ENCODE measurements at regions of chrX and their contacts with region 1.

Region 1: DNA sequence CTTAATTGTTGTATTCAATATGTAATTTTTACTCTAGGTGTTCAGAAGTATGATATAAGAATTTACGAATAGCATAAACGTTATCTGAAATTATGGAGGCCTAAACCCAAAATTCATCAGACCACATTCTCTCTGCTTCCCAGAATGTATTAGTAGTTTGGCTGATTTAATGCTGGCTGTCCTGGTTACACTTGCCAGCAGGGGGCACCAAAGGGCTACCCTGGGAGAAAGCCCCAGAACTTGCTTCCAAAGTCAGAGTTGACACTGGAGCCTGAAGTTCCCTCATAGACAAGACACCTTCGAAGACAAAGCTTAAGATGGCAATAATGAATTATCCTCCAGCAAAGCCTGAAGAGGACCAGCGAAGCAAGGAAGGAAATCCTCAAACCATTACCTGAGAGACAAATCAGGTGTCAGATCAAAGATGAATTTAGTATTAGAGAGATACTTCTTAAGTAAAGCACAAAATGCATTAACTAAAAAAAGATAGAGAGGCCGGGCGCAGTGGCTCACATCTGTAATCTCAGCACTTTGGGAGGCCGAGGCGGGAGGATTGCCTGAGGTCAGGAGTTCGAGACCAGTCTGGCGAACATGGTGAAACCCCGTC is 11.3 kb upstream of the ANOS1 start:
- DNase-seq: peak; percentile 66 to 82
- ATAC-seq: no peak
- H3K4me3 ChIP-seq: no peak overlapping the region
- H3K27ac ChIP-seq: no peak overlapping the region
- H3K4me1 ChIP-seq: no peaks in the 10 kb centered on the region
- H3K27me3 ChIP-seq: peaks cover 0 to 6% of the 10 kb centered on the region in 2 donors

Region 2: DNA sequence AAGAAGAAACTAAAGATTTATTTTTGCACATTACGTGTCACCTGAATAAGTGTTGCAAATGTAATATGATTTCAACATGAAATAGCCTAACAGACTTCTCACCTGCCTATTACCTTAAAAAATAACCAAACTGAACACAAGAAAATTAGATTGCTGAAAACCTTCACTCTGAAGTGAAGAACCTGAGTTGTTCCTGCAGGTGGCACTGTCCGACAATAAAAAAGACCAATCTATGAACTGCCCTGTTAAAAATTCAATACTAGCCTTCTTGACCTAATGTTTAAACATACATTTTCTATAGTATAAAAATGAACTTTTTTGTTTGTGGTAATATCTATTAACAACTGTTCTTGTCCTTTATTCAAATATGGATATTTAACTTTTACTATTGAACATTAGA is 746.8 kb before region 1 on chrX:
- intact Hi-C with region 1: loop called (anchors 5 kb)
- DNase-seq: no peak
- ATAC-seq: no peak
- H3K4me3 ChIP-seq: no peak overlapping the region
- H3K27ac ChIP-seq: no peak overlapping the region
- H3K4me1 ChIP-seq: peaks cover 0 to 2% of the 10 kb centered on the region in 2 donors
- H3K27me3 ChIP-seq: no peaks in the 10 kb centered on the region

Region 3: DNA sequence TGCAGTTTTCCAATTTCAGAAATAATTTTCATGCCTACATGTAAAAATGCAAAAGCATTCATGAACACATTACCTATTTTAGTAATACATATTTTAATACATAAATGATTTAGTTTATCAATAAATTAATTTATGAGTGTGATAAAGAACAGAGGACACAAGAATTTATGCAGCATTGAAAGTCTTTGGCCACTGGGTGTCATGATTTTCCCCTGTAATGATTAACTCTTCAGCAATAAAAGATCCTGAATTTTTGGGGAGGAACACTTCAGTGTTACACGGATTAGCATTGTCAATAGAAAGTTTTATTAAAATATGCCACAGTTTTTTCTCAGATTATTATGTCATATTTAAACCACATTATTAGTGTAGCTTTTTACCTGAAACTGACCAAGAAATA is 563.6 kb before region 1 on chrX:
- intact Hi-C with region 1: loop called in 1 of 2 experiments (anchors 5 kb)
- DNase-seq: no peak
- ATAC-seq: no peak
- H3K4me3 ChIP-seq: no peak overlapping the region
- H3K27ac ChIP-seq: no peak overlapping the region
- H3K4me1 ChIP-seq: no peaks in the 10 kb centered on the region
- H3K27me3 ChIP-seq: no peaks in the 10 kb centered on the region

Region 4: GRCh38 chrX:8364369-8365141 is 378.7 kb before region 1 on chrX:
- intact Hi-C with region 1: loop called in 1 of 2 experiments (anchors 10 kb)
- DNase-seq: no peak
- ATAC-seq: no peak
- H3K4me3 ChIP-seq: no peak overlapping the region
- H3K27ac ChIP-seq: no peak overlapping the region
- H3K4me1 ChIP-seq: no peaks in the 10 kb centered on the region
- H3K27me3 ChIP-seq: no peaks in the 10 kb centered on the region